OCI-LY7 (cell line): ENCODE measurements at regions of chr6 and their contacts with region 1.

Region 1: GRCh38 chr6:159789377-159790148 is at the start of gene TCP1:
- DNase-seq: peak; percentile 99
- H3K4me3 ChIP-seq: peak within 1 kb of the TSS; percentile 99
- H3K27ac ChIP-seq: peak within 1 kb of the TSS; percentile 88
- H3K4me1 ChIP-seq: peaks cover 62% of the 10 kb centered on the region
- CTCF ChIP-seq: no peak
- total RNA-seq, gene TCP1: 319 and 321 TPM in 2 replicates

Region 2: GRCh38 chr6:159042003-159042825 is 747.3 kb before region 1 on chr6:
- CTCF ChIA-PET with region 1: no interaction called
- POLR2A ChIA-PET with region 1: no interaction called
- intact Hi-C with region 1: no loop called
- DNase-seq: peak; percentile 91
- H3K4me3 ChIP-seq: peak overlapping the region; percentile 95
- H3K27ac ChIP-seq: peak overlapping the region; percentile 96
- H3K4me1 ChIP-seq: peaks cover 73% of the 10 kb centered on the region
- CTCF ChIP-seq: peak; percentile 100

Region 3: GRCh38 chr6:159203304-159204005 is 586.1 kb before region 1 on chr6:
- CTCF ChIA-PET with region 1: no interaction called
- POLR2A ChIA-PET with region 1: no interaction called
- intact Hi-C with region 1: no loop called
- DNase-seq: no peak
- H3K4me3 ChIP-seq: no peak overlapping the region
- H3K27ac ChIP-seq: no peak overlapping the region
- H3K4me1 ChIP-seq: no peaks in the 10 kb centered on the region
- CTCF ChIP-seq: no peak

Region 4: DNA sequence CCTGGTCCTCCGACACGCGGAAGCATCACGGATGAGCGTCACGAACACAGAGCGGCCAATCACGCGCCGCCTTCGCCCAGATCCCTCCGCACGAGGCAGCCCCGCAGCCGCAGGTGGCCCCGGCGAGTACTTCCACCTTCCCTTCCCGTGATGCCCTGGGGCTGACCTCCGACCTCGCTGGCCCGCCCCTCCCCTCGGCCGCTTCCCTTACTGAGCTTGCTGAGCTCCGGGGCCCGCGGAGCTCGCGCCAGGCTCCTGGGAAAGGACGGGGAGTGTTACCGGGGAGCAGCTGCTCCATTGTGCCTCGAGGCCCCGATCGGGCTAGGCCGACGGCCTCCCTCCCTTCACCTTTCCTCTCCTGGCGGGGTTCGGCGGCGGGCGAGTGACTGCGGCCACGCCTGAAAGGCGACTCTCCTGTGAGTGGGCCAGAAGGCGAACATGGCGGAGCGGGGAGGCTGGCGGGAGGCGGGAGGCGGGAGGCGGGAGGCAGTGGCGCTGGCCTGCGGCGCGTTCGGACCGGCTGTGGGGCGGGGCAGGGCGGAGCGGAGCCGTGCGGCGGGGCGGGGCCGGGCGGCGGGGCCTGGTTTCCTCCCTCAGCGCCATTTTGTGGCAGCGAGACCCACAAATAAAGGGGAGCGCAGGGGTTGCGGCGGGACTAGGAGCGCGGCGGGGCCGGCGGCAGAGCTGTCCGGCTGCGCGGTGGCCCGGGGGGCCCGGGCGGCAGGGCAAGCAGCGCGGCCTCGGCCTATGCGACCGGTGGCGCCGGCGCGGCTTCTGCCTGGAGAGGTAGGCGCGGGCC is 62.4 kb before region 1 on chr6 and contains the start of gene WTAP:
- CTCF ChIA-PET with region 1: interaction called, 5 read pairs
- POLR2A ChIA-PET with region 1: interaction called, 48 read pairs
- intact Hi-C with region 1: loop called (anchors 1 kb)
- DNase-seq: peak; percentile 98
- H3K4me3 ChIP-seq: peak within 1 kb of the TSS; percentile 91
- H3K27ac ChIP-seq: peak within 1 kb of the TSS; percentile 89
- H3K4me1 ChIP-seq: peaks cover 39% of the 10 kb centered on the region
- CTCF ChIP-seq: no peak
- total RNA-seq, gene WTAP: 93.3 and 99.3 TPM in 2 replicates

Region 5: DNA sequence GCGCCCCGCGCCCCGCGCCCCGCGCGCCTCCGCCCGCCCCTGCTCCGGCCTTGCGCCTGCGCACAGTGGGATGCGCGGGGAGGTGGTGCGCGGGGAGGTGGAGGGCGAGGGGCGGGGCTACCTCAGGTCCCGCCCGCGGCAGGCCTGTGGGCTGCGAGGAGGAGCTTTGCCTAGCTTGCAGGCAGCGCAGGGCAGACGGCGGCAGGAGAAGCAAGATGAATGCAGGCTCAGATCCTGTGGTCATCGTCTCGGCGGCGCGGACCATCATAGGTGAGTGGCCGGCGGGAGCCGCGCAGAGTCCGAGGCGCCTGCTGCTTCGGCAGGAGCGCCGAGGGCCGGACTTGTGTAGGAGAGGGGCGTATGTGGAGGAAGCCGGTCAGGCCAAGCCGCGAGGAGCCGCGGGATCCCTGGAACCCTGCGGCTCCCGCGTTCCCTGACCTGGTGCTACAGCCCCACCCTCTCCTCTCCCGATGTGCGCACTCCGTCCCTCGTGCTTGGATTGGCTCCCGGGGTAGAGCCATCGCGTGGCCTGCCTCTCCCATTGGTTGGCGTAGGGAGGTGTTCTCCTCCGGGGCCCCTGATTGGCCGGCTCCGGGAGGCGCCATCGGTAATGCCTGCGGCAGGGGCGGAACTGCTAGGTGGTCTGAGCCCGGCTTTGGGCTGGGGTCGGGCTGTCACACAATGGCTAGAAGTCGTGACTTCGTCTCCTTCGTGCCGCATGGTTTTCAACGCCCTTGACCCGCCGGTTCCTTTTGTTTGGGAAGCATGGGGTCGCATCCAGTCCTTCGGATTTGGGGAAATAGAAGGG is 27.5 kb before region 1 on chr6 and contains the start of gene ACAT2:
- CTCF ChIA-PET with region 1: no interaction called
- POLR2A ChIA-PET with region 1: interaction called, 11 read pairs
- intact Hi-C with region 1: loop called (anchors 1 kb)
- DNase-seq: peak; percentile 97
- H3K4me3 ChIP-seq: peak within 1 kb of the TSS; percentile 71
- H3K27ac ChIP-seq: peak within 1 kb of the TSS; percentile 81
- H3K4me1 ChIP-seq: peaks cover 15% of the 10 kb centered on the region
- CTCF ChIP-seq: no peak
- total RNA-seq, gene ACAT2: 39.4 and 42.4 TPM in 2 replicates

Region 6: GRCh38 chr6:159807150-159807858 is 17.7 kb after region 1 on chr6:
- CTCF ChIA-PET with region 1: interaction called, 3 read pairs
- POLR2A ChIA-PET with region 1: interaction called, 15 read pairs
- intact Hi-C with region 1: no loop called
- DNase-seq: no peak
- H3K4me3 ChIP-seq: no peak overlapping the region
- H3K27ac ChIP-seq: no peak overlapping the region
- H3K4me1 ChIP-seq: peaks cover 20% of the 10 kb centered on the region
- CTCF ChIP-seq: no peak

Region 7: DNA sequence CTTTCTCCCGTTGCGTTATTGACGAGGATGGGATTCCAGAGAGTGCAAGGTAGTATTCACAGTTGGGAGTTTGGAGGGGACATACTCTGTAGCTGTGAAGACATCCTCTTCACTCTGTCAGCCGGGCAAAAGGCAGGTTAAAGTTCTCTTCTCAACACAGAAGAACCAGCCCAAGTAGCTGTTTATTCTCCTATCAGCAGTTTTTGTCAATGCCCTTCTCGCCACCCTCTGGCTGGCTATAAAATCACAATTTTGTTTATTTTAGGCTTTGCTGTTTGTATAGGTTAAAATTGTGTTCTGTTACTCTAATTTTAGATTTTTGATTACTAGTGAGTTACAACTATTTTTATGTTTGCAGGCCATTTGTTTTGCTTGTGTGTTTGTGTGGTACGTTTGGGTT is 63.3 kb after region 1 on chr6:
- CTCF ChIA-PET with region 1: no interaction called
- POLR2A ChIA-PET with region 1: no interaction called
- intact Hi-C with region 1: loop called (anchors 2 kb)
- DNase-seq: peak; percentile 58
- H3K4me3 ChIP-seq: no peak overlapping the region
- H3K27ac ChIP-seq: no peak overlapping the region
- H3K4me1 ChIP-seq: no peaks in the 10 kb centered on the region
- CTCF ChIP-seq: peak; percentile 81

Region 8: GRCh38 chr6:159968440-159969203 is 179.1 kb after region 1 on chr6 and contains the start of gene IGF2R:
- CTCF ChIA-PET with region 1: no interaction called
- POLR2A ChIA-PET with region 1: interaction called, 3 read pairs
- intact Hi-C with region 1: loop called (anchors 10 kb)
- DNase-seq: peak; percentile 96
- H3K4me3 ChIP-seq: peak within 1 kb of the TSS; percentile 92
- H3K27ac ChIP-seq: peak within 1 kb of the TSS; percentile 19
- H3K4me1 ChIP-seq: peaks cover 17% of the 10 kb centered on the region
- CTCF ChIP-seq: no peak
- total RNA-seq, gene IGF2R: 17.9 and 19.3 TPM in 2 replicates